PC-9 (cell line): ENCODE measurements at regions of chr12 and their contacts with region 1.

Region 1: DNA sequence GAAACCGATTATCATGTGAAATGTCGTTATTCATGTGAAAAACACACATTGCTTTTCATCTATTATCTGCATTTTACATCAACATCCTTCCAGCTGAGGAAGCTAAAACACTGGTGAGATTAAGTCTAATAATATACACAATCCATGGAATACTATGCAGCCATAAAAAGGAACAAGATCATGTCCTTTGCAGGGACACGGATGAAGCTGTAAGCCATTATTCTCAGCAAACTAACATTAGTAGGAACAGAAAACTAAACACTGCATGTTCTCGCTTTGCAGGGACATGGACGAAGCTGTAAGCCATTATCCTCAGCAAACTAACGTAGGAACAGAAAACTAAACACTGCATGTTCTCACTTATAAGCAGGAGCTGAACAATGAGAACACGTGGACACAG is 18.3 kb downstream of the KICS2 start:
- DNase-seq: no peak
- H3K4me3 ChIP-seq: no peak overlapping the region
- H3K27ac ChIP-seq: no peak overlapping the region
- H3K4me1 ChIP-seq: no peaks in the 10 kb centered on the region
- H3K27me3 ChIP-seq: no peaks in the 10 kb centered on the region
- CTCF ChIP-seq: no peak

Region 2: GRCh38 chr12:64767495-64767894 is 563.7 kb after region 1 on chr12:
- CTCF ChIA-PET with region 1: no interaction called
- POLR2A ChIA-PET with region 1: interaction called, 20 read pairs
- intact Hi-C with region 1: no loop called
- DNase-seq: peak in 1 of 2 experiments; percentile 46
- H3K4me3 ChIP-seq: no peak overlapping the region
- H3K27ac ChIP-seq: no peak overlapping the region
- H3K4me1 ChIP-seq: no peaks in the 10 kb centered on the region
- H3K27me3 ChIP-seq: no peaks in the 10 kb centered on the region
- CTCF ChIP-seq: no peak